Lower leg skin (tissue), 4 donors: ENCODE measurements at regions of chr6 and their contacts with region 1.

Region 1: DNA sequence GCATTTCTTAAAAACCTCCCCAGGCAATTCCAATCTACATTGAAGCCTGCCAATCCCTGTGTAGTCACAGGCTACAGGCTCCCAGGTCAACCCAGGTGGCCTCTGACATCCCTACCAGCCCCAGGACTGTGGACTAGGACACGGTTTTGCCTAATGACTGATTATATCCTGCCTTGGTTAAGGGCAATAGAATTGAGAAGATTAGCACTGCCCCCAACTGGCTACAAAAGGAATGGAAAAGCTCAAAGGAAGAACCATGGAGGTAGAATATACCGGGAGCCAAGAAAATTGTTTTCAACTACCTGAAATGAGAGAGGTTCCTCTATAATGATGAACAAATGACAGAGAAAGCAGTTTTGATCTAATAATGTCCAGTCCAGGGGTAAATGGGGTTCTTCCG is 421.1 kb upstream of the AGPAT4 start:
- DNase-seq: no peak
- H3K4me3 ChIP-seq: no peak overlapping the region
- CTCF ChIP-seq: no peak
- POLR2A ChIP-seq: no peak

Region 2: DNA sequence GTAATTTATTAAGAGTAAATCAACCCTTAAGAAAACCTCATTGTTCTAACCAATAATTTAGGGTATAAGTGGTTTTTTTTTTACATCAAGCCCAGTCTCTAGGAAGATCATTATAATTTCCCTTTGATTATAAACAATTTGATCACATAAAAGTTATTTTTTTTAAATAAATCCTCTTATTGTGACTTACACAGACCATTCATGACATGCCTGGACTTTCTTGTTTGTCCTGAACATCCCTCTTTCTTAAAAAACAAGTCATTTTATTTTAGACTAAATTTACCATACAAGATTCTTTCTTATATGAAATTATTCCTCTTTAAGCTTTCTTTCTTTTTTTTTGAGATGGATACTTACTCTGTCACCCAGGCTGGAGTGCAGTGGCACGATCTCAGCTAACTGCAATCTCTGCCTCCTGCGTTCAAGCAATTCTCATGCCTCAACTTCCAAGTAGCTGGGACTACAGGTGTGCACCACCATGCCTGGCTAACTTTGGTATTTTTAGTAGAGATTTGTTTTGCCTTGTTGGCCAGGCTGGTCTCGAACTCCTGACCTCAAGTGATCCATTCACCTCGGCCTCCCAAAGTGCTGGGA is 367.5 kb before region 1 on chr6:
- intact Hi-C with region 1: no loop called
- DNase-seq: no peak
- H3K4me3 ChIP-seq: no peak overlapping the region
- CTCF ChIP-seq: no peak
- POLR2A ChIP-seq: no peak

Region 3: DNA sequence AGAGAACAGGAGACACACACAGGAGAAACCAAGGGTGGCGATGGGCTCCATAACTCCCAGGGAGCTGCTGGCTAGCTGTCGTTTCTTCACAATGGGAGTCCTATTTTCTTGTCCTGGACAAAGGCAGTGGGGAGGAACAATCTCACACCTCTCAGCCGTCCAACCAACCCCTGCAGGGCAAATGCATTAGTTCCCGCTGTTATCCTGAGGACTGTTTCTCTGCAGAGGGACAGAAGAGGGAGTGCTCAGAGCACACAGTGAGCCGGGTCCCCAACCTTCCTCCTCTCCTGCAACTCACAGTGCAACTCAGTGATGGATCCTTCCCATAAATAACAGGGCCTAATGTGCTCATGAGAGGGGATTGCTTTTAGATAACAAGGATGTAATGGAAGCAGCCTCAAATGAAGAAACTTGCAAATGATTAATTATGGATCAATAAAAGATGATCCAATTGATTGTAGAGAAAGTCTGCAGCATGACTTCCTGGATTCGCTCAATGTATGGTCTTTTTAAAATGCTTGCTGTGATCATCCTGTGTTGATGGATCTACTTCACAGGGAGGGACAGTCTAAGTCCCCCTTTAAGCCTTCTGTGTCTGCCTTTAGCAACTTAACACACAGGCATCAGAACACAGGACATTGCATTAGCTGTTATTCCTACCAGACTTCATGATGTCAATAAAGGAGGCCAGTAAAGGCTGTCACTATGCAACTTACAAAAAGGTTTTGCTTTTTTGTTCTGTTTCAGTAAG is 32.3 kb after region 1 on chr6:
- intact Hi-C with region 1: loop called (anchors 2 kb)
- DNase-seq: no peak
- H3K4me3 ChIP-seq: no peak overlapping the region
- CTCF ChIP-seq: no peak
- POLR2A ChIP-seq: no peak